ENCODE measurements at regions of chr15 and their contacts with region 1.

Region 1: GRCh38 chr15:63402498-63403253 is 21.0 kb upstream of the CA12 start:
- DNase-seq: peak; percentile 67
- H3K4me3 ChIP-seq: no peak overlapping the region
- H3K27ac ChIP-seq: no peak overlapping the region
- H3K4me1 ChIP-seq: peaks cover 17% of the 10 kb centered on the region
- H3K27me3 ChIP-seq: no peaks in the 10 kb centered on the region
- CTCF ChIP-seq: peak; percentile 43 to 48
- POLR2A ChIP-seq: no peak

Region 2: GRCh38 chr15:62950462-62950931 is 452.2 kb before region 1 on chr15:
- CTCF ChIA-PET with region 1: no interaction called
- POLR2A ChIA-PET with region 1: no interaction called
- dilution Hi-C with region 1: no loop called
- intact Hi-C with region 1: no loop called
- DNase-seq: no peak
- H3K4me3 ChIP-seq: no peak overlapping the region
- H3K27ac ChIP-seq: no peak overlapping the region
- H3K4me1 ChIP-seq: no peaks in the 10 kb centered on the region
- H3K27me3 ChIP-seq: peaks cover 0 to 9% of the 10 kb centered on the region in 2 experiments
- CTCF ChIP-seq: no peak
- POLR2A ChIP-seq: no peak

Region 3: GRCh38 chr15:63048115-63048775 is 354.4 kb before region 1 on chr15:
- CTCF ChIA-PET with region 1: interaction called, 11 read pairs
- POLR2A ChIA-PET with region 1: no interaction called
- dilution Hi-C with region 1: no loop called
- intact Hi-C with region 1: loop called (anchors 1 kb)
- DNase-seq: peak; percentile 94
- H3K4me3 ChIP-seq: peak overlapping the region; percentile 72 to 87 (median 78)
- H3K27ac ChIP-seq: peak overlapping the region; percentile 68
- H3K4me1 ChIP-seq: peaks cover 81% of the 10 kb centered on the region
- H3K27me3 ChIP-seq: no peaks in the 10 kb centered on the region
- CTCF ChIP-seq: peak; percentile 92 to 95
- POLR2A ChIP-seq: peak; percentile 66

Region 4: DNA sequence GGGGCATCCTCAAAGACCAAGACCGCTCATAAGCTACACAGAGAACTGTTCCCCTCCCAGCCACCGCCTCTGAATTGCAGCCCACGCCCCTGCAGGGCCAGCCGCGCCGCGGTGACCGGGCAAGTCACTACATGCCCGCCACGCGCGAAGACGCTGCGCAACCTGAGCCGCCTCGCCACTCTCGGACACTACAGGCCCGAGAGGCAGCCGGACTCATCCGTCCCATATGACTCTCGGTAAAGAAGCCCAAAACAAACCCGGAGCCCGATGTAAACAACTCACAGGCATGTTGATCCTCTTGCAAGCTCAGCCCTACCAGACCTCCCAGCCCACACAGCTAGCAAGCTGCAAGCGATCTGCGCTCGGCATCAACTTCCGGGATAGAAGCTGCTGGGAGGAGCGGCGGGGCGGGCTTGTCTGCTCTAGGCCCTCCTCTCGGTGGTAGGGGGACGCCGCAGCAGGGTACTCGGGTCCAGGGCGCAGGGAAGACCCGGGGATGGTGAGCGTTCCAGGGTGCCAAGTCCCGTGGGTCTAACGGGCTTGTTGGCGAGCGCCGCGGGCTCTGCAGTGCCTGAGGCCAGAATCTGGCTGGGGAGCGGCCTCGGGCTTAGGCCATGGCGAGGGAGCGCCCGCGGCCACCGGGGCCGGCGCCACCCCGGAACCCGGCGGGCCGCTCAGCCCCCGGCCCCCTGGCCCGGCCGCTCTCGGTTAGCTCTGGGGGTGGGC is 245.4 kb before region 1 on chr15 and contains the start of gene RPS27L:
- CTCF ChIA-PET with region 1: interaction called, 4 read pairs
- POLR2A ChIA-PET with region 1: no interaction called
- dilution Hi-C with region 1: no loop called
- intact Hi-C with region 1: loop called (anchors 1 kb)
- DNase-seq: peak; percentile 92
- H3K4me3 ChIP-seq: peak within 1 kb of the TSS; percentile 54 to 98 (median 88)
- H3K27ac ChIP-seq: peak within 1 kb of the TSS; percentile 71
- H3K4me1 ChIP-seq: peaks cover 11% of the 10 kb centered on the region
- H3K27me3 ChIP-seq: no peaks in the 10 kb centered on the region
- CTCF ChIP-seq: no peak
- POLR2A ChIP-seq: peak; percentile 99
- total RNA-seq, gene RPS27L: 338 and 345 TPM in 2 replicates

Region 5: DNA sequence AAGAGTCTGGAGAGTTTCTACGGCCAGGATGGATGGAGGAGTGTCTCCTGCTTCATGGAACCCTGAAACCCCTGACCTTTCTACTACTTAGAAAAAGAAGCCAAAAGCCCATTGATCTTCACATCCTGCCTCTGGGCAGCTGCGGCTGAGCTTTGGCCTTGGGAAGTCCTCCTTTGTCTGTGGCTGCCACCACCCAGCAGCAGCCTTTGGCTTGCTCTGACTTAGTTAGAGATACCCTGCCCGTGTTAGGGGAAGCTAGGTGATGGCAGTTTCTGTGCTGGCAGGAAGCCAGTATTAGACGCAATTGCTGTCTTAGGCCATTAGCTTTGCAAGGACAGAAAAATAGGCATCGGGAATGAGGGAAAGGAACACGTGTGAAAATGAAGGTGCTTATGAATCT is 106.5 kb before region 1 on chr15:
- CTCF ChIA-PET with region 1: interaction called, 166 read pairs
- POLR2A ChIA-PET with region 1: interaction called, 4 read pairs
- dilution Hi-C with region 1: no loop called
- intact Hi-C with region 1: no loop called
- DNase-seq: peak; percentile 8
- H3K4me3 ChIP-seq: no peak overlapping the region
- H3K27ac ChIP-seq: no peak overlapping the region
- H3K4me1 ChIP-seq: peaks cover 8% of the 10 kb centered on the region
- H3K27me3 ChIP-seq: no peaks in the 10 kb centered on the region
- CTCF ChIP-seq: no peak
- POLR2A ChIP-seq: no peak

Region 6: DNA sequence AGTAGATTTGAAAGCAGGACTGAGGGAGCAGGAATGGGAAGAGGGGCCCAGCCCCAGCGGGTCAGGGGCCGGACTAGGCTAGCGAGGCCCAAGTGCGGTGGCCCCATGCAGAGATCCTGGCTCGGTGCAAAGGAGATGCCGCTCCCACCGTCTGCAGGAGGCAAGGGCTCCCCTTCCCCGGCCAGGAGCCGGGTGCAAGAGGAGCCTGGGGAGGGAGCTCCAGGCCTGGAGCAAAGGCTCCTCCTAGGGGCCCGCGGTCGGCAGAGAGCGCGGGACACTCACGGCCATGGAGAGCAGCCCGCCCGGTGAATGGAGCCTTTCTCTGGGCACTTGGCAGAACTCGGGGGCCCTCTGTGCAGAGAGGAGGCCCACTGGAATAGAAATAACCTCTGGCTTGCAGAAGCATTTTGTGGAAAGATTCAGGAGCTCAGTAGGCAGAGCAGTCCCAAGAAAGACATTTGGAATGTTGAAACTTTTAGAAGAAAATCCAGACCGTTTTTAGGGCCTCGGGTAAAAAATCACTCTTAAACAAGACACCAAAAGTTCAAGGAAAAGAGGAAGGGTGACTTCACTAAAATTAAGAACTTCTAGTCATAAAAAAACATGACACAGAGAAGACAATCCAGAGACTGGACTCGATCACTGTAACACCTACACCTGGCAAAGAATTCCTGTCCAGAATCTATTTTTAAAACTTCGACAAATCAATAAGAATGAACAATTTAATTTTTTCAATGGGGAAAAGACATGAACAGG is 58.7 kb after region 1 on chr15:
- CTCF ChIA-PET with region 1: interaction called, 10 read pairs
- POLR2A ChIA-PET with region 1: no interaction called
- dilution Hi-C with region 1: no loop called
- intact Hi-C with region 1: loop called (anchors 5 kb)
- DNase-seq: no peak
- H3K4me3 ChIP-seq: no peak overlapping the region
- H3K27ac ChIP-seq: no peak overlapping the region
- H3K4me1 ChIP-seq: peaks cover 10% of the 10 kb centered on the region
- H3K27me3 ChIP-seq: no peaks in the 10 kb centered on the region
- CTCF ChIP-seq: no peak
- POLR2A ChIP-seq: no peak